Right ventricle myocardium inferior (tissue), 1 donor: ENCODE measurements at regions of chr11 and their contacts with region 1.

Region 1: GRCh38 chr11:133520707-133521106 is 11.6 kb downstream of the OPCML start:
- DNase-seq: no peak
- ATAC-seq: peak; percentile 79

Region 2: DNA sequence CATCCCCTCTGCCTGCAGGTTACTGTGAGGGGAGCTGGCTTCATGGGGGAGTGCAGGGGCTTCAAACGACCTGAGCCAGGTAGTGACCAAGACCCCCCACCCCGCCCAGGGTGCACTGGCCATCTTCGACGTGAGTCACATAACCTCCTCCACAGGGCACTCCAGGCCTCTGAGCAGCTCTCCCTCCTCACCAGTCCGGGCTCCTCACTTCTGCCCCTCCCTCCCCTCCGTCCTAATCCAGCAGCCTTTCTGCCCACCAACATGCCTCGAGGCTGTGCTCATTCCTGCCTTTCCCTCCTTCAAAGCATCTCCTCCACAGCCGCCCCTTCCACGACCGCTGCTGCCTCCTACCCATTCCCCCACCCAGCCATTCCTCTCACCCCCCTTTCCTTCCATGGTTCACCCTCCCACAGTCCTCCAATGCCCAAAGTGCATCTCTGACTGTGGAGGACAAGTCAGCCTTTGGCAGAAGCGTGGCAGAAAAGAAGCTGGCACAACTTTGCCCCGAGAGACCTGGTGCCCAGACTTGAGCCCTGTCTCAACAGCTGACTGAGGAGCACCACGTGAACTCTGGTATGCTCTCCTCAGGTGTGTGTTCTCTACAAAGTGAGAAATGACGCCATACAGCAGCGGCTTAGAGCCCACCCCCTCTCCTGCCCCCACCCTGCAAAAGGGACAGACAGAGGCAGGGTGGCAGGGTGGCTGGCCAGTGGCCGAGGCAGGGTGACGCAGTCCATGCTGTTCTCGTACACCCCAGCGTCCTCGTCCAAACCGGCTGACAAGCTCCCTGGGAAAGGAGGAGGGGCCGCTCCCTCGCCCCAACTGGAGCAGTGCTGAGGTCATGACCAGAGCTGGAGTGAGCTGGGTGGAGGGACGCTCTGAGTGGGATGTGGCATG is 18.8 kb before region 1 on chr11:
- intact Hi-C with region 1: no loop called
- DNase-seq: no peak
- ATAC-seq: peak; percentile 24

Region 3: GRCh38 chr11:133582750-133583149 is 62.0 kb after region 1 on chr11:
- intact Hi-C with region 1: no loop called
- DNase-seq: no peak
- ATAC-seq: no peak

Region 4: DNA sequence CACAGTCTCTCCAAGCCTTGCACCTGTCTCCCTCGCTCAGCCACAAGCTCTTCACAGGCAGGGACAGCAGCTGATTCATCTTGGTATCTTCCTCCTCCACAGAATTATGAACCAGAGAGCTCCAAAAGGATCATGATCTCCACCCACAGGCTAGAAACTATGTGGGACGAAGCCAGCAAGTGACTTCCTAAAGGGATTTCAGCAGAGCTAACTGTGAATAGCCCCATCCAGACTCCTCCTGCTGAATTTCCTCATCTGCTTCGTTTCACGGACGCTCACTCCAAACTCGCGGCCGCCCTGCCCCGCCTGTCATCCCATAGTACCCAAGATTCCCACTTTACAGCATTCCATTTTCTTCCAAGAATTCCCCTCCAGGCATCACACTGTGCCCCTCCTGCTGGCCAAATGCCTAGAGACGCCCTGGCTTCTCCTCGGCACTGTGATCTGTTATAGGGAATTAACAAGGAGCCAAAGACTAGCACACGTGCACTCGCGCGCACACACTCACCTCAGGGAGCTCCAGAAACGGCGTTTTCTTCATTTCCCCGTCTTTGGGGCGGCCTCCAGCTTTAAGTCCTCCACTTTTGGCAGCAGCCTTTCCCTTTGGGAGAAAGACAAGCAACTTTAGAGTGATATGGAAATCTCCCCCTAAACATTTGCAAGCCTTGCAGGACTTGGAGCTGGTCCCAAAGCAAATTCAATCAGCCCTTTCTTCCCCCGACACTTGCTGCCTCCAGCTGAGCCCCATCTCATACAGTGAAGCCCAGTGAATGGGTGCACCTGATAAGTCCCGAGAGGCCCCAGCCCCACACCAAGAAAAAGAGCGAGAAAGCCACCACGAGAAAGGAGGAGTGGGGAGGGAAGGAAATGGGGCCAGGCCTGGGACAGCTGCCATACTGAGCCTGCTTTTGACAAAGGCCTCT is 289.1 kb after region 1 on chr11:
- intact Hi-C with region 1: loop called (anchors 10 kb)
- DNase-seq: no peak
- ATAC-seq: peak; percentile 59